A673 (cell line): ENCODE measurements at regions of chr12 and their contacts with region 1.

Region 1: DNA sequence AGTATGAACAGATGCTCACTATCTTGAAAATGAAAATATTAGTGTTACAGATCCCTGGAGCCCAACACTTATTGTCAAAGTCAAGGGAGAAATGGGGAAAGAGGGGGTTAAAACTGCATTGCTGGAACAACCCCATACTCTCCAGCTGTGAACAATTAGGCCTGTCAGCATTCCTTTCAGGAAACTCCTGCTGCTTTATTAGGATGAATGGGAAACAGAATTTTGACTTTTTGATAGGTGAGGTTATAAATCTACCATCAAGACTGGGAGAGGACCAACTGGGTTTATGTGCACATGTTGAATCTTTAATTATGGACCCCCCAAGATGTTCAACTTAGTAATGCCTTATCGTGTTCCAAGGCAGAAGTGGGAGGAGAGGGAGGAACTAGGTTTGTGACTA is 85.0 kb downstream of the TMTC1 start:
- DNase-seq: peak; percentile 93
- H3K4me3 ChIP-seq: no peak overlapping the region
- H3K27ac ChIP-seq: no peak overlapping the region
- H3K4me1 ChIP-seq: peaks cover 21% of the 10 kb centered on the region
- H3K27me3 ChIP-seq: peaks cover 34% of the 10 kb centered on the region
- CTCF ChIP-seq: no peak

Region 2: DNA sequence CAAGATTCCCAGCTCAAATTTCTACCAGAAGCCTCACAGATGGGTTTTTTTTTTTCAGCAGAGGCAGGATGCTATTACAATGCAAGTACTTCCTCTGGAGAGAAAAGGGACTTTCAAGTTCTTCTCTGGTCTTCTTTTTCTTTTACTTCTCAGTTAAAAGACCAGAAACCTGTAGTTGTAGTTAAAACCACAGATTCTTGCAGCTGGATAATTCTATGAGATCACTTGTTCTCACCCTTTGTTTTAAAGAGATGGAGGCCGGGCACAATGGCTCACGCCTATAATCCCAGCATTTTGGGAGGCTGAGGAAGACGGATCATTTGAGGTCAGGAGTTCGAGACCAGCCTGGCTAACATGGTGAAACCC is 153.7 kb before region 1 on chr12:
- CTCF ChIA-PET with region 1: no interaction called
- POLR2A ChIA-PET with region 1: no interaction called
- intact Hi-C with region 1: no loop called
- DNase-seq: no peak
- H3K4me3 ChIP-seq: no peak overlapping the region
- H3K27ac ChIP-seq: no peak overlapping the region
- H3K4me1 ChIP-seq: no peaks in the 10 kb centered on the region
- H3K27me3 ChIP-seq: no peaks in the 10 kb centered on the region
- CTCF ChIP-seq: no peak

Region 3: DNA sequence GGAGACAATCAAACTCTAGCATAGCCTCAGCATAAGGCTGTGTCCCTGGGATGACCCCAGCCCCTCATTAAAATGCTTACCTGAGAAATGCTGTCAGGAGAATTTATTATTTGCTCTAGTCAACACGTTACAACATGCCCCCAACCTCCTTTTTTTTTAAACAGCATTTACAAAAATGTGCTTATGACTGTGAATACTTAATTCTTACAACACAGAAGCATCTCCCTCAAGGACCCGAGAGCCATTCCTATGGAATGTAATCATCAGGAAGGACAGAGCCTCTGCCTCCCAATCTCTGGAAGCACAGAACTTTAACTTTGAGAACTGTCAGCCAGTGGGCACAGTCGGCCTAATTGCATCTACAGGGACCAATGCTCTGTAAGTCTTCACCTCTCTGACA is 64.7 kb before region 1 on chr12:
- CTCF ChIA-PET with region 1: no interaction called
- POLR2A ChIA-PET with region 1: no interaction called
- intact Hi-C with region 1: no loop called
- DNase-seq: no peak
- H3K4me3 ChIP-seq: no peak overlapping the region
- H3K27ac ChIP-seq: no peak overlapping the region
- H3K4me1 ChIP-seq: no peaks in the 10 kb centered on the region
- H3K27me3 ChIP-seq: peaks cover 4% of the 10 kb centered on the region
- CTCF ChIP-seq: no peak

Region 4: GRCh38 chr12:30088259-30088995 is 389.7 kb after region 1 on chr12:
- CTCF ChIA-PET with region 1: interaction called, 10 read pairs
- POLR2A ChIA-PET with region 1: no interaction called
- intact Hi-C with region 1: no loop called
- DNase-seq: no peak
- H3K4me3 ChIP-seq: no peak overlapping the region
- H3K27ac ChIP-seq: no peak overlapping the region
- H3K4me1 ChIP-seq: no peaks in the 10 kb centered on the region
- H3K27me3 ChIP-seq: peaks cover 45% of the 10 kb centered on the region
- CTCF ChIP-seq: no peak